Esophagus squamous epithelium (tissue), 5 donors: ENCODE measurements at regions of chr12 and their contacts with region 1.

Region 1: DNA sequence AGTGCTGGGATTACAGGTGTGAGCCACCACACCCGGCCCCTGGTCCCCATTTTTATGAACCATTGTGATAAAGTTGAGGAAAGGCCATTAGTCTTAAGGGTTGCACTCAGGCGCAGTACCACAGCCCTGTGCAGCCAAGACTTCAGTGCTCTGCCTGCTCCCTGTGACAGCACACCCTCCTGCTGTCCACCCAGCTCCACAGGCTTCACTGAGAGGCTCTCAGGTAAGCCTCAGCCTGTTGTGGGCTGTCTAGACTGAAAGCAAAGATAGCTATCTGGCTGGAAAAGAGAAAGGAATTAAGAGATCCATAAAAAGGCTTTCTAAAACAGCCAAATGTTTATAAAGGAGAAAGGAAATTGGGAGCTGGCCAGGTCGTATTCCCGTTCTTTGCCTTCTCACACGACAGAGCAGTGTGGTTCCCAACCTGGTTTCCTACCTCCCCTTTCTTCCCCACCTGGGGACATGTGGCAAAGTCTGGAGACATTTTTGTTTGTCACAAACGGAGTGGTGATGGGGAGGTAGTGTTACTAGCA is 19.1 kb upstream of the DNM1L start:
- DNase-seq: no peak
- H3K4me3 ChIP-seq: no peak overlapping the region
- H3K27ac ChIP-seq: peak overlapping the region in 3 of 4 donors; percentile 19 to 44 (median 32)
- H3K4me1 ChIP-seq: peaks cover 0 to 12% (median 4%) of the 10 kb centered on the region in 3 donors
- H3K27me3 ChIP-seq: no peaks in the 10 kb centered on the region
- CTCF ChIP-seq: no peak
- POLR2A ChIP-seq: no peak

Region 2: GRCh38 chr12:32455607-32456071 is 204.3 kb before region 1 on chr12:
- intact Hi-C with region 1: loop called (anchors 5 kb)
- DNase-seq: no peak
- H3K4me3 ChIP-seq: peak overlapping the region in 3 of 4 donors; percentile 10 to 55 (median 22)
- H3K27ac ChIP-seq: peak overlapping the region in 3 of 4 donors; percentile 29 to 59 (median 53)
- H3K4me1 ChIP-seq: peaks cover 0 to 55% (median 20%) of the 10 kb centered on the region in 3 donors
- H3K27me3 ChIP-seq: no peaks in the 10 kb centered on the region
- CTCF ChIP-seq: peak; percentile 26 to 73 (median 62)
- POLR2A ChIP-seq: no peak